B cell (primary cell): ENCODE measurements at regions of chr6 and their contacts with region 1.

Region 1: GRCh38 chr6:25404693-25405169 is 125.6 kb downstream of the CARMIL1 start:
- DNase-seq: peak; percentile 75
- ATAC-seq: peak; percentile 93
- H3K4me3 ChIP-seq: peak overlapping the region; percentile 32 to 70 (median 49)
- H3K4me3 Mint-ChIP-seq: no peak overlapping the region
- H3K27ac ChIP-seq: peak overlapping the region; percentile 70 to 71
- H3K27ac Mint-ChIP-seq: no peak overlapping the region
- H3K4me1 ChIP-seq: peaks cover 44 to 48% of the 10 kb centered on the region in 2 donors
- H3K4me1 Mint-ChIP-seq: peaks cover 18% of the 10 kb centered on the region
- H3K27me3 ChIP-seq: no peaks in the 10 kb centered on the region
- H3K27me3 Mint-ChIP-seq: no peaks in the 10 kb centered on the region
- CTCF ChIP-seq: no peak

Region 2: DNA sequence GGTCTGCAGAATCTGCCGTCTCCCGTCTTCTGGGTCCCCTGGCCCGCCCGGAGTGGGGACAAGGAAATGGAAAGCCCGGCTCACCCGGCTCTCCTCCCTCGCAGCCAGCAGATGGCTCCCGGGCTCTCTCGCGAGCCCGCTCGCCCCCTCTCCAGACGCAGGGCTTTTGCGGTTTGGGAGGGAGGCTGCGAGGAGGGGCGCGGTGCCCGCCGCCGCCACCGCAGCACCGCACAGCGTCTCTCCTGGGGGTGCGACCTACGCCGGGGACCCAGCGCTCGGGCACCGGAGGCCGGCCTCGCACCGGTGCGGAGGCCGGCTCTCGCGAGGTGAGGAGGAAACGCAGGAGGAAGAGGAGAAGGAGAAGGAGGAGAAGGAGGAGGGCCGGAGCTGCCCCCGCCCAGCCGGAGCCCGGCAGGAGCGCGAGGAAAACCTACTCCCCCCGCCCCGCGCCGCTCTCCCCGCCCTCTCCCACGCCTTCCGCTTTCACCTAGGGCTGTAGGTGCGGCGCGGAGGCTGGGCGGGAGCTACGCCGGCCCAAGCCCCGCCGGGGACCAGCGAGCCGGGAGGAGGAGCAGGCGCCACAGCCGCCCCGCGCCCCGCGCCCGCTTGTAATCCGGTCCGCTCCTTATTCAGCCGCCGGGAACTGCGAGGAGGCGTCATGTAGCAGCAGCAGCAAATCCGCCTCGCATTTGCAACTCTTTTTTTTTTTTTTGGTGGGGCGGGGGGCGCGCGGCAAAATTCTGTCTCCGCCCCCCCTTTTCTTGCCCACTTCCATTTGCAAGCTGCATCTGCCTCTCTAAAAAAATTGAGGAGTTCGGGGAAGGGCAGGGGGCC is 125.6 kb before region 1 on chr6 and contains the start of gene CARMIL1:
- CTCF ChIA-PET with region 1: interaction called, 15 read pairs
- POLR2A ChIA-PET with region 1: interaction called, 10 read pairs
- intact Hi-C with region 1: loop called (anchors 1 kb)
- DNase-seq: peak; percentile 79
- ATAC-seq: peak; percentile 82
- H3K4me3 ChIP-seq: peak within 1 kb of the TSS; percentile 61 to 86 (median 83)
- H3K4me3 Mint-ChIP-seq: peak within 1 kb of the TSS; percentile 96
- H3K27ac ChIP-seq: peak within 1 kb of the TSS; percentile 39 to 66
- H3K27ac Mint-ChIP-seq: peak within 1 kb of the TSS; percentile 89
- H3K4me1 ChIP-seq: peaks cover 23 to 30% of the 10 kb centered on the region in 2 donors
- H3K4me1 Mint-ChIP-seq: peaks cover 34% of the 10 kb centered on the region
- H3K27me3 ChIP-seq: no peaks in the 10 kb centered on the region
- H3K27me3 Mint-ChIP-seq: peaks cover 5% of the 10 kb centered on the region
- CTCF ChIP-seq: peak; percentile 53
- total RNA-seq, gene CARMIL1: 7.5 and 9.0 TPM in 2 replicates

Region 3: DNA sequence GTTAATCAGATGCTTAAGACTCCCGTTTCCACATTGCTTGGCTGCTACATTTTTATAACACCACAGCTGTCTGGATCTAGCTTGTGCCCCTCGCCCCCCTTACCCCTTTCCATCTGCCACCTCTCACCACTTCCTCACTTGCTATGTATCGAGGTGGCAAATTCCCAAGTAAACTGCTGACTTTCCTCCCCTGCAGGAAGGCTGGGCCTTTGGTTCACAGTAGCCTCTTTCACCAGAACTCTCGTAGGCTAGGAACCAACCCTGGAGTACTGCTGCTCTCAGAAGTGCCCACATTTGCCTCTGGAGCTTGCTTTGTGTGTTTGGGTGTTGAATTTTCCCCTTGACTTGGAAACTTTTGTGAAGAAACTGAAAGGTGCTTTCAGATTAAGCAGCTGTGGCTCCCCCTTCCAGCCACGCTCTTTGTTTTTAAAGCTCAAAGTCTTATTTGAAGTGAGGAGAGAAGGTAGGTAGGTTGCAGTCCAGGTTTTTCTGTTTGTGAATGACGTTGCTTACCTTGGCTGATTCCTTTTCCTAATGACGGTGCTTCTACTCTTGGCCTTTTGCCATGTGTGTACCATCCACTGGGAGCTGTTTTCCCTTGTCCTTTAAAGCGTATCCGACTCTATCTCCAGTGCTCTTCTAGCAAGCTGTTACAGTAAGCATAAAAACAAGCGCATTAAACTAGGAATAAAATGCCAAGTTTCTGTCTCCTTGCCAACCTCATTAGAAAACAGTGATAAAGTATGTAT is 35.1 kb before region 1 on chr6:
- CTCF ChIA-PET with region 1: no interaction called
- POLR2A ChIA-PET with region 1: interaction called, 6 read pairs
- intact Hi-C with region 1: loop called (anchors 2 kb)
- DNase-seq: no peak
- ATAC-seq: no peak
- H3K4me3 ChIP-seq: no peak overlapping the region
- H3K4me3 Mint-ChIP-seq: peak overlapping the region; percentile 42
- H3K27ac ChIP-seq: peak overlapping the region in 1 of 2 donors; percentile 22
- H3K27ac Mint-ChIP-seq: peak overlapping the region; percentile 43
- H3K4me1 ChIP-seq: peaks cover 19 to 30% of the 10 kb centered on the region in 2 donors
- H3K4me1 Mint-ChIP-seq: peaks cover 62% of the 10 kb centered on the region
- H3K27me3 ChIP-seq: no peaks in the 10 kb centered on the region
- H3K27me3 Mint-ChIP-seq: no peaks in the 10 kb centered on the region
- CTCF ChIP-seq: no peak

Region 4: DNA sequence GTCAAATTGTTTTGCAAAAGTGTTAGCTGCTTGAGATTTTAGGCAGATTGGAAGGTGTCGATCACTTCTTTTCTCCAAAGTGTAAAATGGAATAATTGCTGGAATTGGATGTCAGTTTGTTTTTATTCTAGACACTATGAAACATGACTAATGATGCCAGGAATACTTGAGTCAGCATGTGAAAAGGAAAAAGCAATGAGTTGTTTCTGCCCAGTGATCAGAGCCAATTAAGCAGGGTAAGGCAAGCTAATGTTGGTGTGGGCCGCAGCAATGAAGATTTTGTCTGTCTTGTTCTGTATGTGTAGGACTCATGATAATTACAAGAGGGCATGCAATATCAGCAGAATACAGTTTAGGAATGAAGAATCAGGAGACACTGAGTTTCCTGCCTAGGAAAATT is 15.3 kb before region 1 on chr6:
- CTCF ChIA-PET with region 1: interaction called, 3 read pairs
- POLR2A ChIA-PET with region 1: no interaction called
- intact Hi-C with region 1: loop called (anchors 1 kb)
- DNase-seq: no peak
- ATAC-seq: no peak
- H3K4me3 ChIP-seq: no peak overlapping the region
- H3K4me3 Mint-ChIP-seq: no peak overlapping the region
- H3K27ac ChIP-seq: no peak overlapping the region
- H3K27ac Mint-ChIP-seq: no peak overlapping the region
- H3K4me1 ChIP-seq: peaks cover 23 to 24% of the 10 kb centered on the region in 2 donors
- H3K4me1 Mint-ChIP-seq: peaks cover 23% of the 10 kb centered on the region
- H3K27me3 ChIP-seq: no peaks in the 10 kb centered on the region
- H3K27me3 Mint-ChIP-seq: peaks cover 4% of the 10 kb centered on the region
- CTCF ChIP-seq: no peak

Region 5: DNA sequence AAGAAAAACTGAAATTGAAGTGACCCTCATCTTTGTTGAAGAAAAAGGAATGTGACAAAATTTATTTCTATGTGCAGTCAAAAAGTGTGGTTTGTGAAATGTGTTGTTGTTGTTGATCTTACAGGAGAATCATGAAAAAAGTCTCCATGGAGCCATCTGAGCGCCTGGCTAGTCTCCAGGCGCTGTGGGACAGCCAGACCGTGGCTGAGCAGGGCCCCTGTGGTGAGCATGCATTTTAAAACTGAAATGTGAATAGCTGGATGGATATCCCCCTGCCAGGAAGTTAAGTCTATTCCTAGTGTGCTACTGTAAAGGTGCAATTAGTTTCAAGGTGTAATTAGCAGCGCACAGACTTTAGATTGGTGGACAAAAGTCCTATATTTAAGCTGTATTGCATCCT is 45.0 kb after region 1 on chr6:
- CTCF ChIA-PET with region 1: no interaction called
- POLR2A ChIA-PET with region 1: no interaction called
- intact Hi-C with region 1: loop called (anchors 5 kb)
- DNase-seq: no peak
- ATAC-seq: no peak
- H3K4me3 ChIP-seq: no peak overlapping the region
- H3K4me3 Mint-ChIP-seq: no peak overlapping the region
- H3K27ac ChIP-seq: no peak overlapping the region
- H3K27ac Mint-ChIP-seq: no peak overlapping the region
- H3K4me1 ChIP-seq: peaks cover 11 to 15% of the 10 kb centered on the region in 2 donors
- H3K4me1 Mint-ChIP-seq: peaks cover 23% of the 10 kb centered on the region
- H3K27me3 ChIP-seq: no peaks in the 10 kb centered on the region
- H3K27me3 Mint-ChIP-seq: no peaks in the 10 kb centered on the region
- CTCF ChIP-seq: no peak

Region 6: GRCh38 chr6:25504661-25505060 is 99.9 kb after region 1 on chr6:
- CTCF ChIA-PET with region 1: no interaction called
- POLR2A ChIA-PET with region 1: no interaction called
- intact Hi-C with region 1: no loop called
- DNase-seq: no peak
- ATAC-seq: no peak
- H3K4me3 ChIP-seq: no peak overlapping the region
- H3K4me3 Mint-ChIP-seq: no peak overlapping the region
- H3K27ac ChIP-seq: no peak overlapping the region
- H3K27ac Mint-ChIP-seq: no peak overlapping the region
- H3K4me1 ChIP-seq: no peaks in the 10 kb centered on the region
- H3K4me1 Mint-ChIP-seq: no peaks in the 10 kb centered on the region
- H3K27me3 ChIP-seq: no peaks in the 10 kb centered on the region
- H3K27me3 Mint-ChIP-seq: no peaks in the 10 kb centered on the region
- CTCF ChIP-seq: no peak